Endothelial cell of umbilical vein (primary cell): ENCODE measurements at regions of chr7 and their contacts with region 1.

Region 1: DNA sequence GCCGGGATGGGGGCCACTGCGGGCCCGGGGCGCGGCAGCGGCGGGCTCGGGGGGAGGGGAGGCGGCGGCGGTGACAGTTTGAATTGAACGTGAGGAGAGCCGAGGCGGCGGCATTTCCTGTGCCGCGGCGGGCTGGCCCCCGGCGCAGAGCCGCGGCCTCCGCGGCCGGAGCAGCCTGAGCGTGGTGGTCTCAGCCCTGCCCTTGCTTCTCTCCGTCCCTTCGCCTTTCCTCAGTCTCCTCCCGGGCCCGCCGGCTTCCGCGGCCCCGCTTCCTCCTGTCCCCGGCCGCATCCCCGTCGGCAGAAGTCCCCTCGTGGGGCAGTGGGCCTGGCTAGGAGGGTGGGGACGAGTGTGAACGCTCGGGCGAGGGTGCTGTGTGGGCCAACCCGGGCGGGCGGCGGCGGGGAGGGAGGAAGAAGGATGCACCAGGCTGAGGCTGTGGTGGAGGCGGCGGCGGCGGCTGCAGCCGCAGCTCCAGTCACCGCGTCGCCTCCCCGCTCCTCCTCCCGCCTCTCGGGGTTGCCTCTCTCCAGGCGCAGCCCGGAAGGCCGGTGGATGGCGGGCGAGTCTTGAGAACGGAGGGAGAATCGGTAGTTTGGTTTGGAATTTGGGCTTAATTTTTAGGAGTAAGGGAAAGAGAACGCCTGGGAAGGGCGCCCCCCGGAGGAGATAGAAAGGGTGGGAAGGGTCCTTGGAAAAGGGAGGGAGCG is 690 bp downstream of the SEPTIN7 start:
- DNase-seq: peak; percentile 71
- H3K4me3 ChIP-seq: peak overlapping the region; percentile 61 to 97 (median 76)
- H3K27ac ChIP-seq: peak overlapping the region; percentile 53
- H3K4me1 ChIP-seq: peaks cover 20% of the 10 kb centered on the region
- H3K27me3 ChIP-seq: no peaks in the 10 kb centered on the region
- CTCF ChIP-seq: peak; percentile 50 to 60
- POLR2A ChIP-seq: peak; percentile 58

Region 2: GRCh38 chr7:35571611-35572240 is 229.8 kb before region 1 on chr7:
- CTCF ChIA-PET with region 1: no interaction called
- POLR2A ChIA-PET with region 1: no interaction called
- dilution Hi-C with region 1: no loop called
- intact Hi-C with region 1: no loop called
- DNase-seq: no peak
- H3K4me3 ChIP-seq: no peak overlapping the region
- H3K27ac ChIP-seq: no peak overlapping the region
- H3K4me1 ChIP-seq: no peaks in the 10 kb centered on the region
- H3K27me3 ChIP-seq: no peaks in the 10 kb centered on the region
- CTCF ChIP-seq: no peak
- POLR2A ChIP-seq: no peak

Region 3: DNA sequence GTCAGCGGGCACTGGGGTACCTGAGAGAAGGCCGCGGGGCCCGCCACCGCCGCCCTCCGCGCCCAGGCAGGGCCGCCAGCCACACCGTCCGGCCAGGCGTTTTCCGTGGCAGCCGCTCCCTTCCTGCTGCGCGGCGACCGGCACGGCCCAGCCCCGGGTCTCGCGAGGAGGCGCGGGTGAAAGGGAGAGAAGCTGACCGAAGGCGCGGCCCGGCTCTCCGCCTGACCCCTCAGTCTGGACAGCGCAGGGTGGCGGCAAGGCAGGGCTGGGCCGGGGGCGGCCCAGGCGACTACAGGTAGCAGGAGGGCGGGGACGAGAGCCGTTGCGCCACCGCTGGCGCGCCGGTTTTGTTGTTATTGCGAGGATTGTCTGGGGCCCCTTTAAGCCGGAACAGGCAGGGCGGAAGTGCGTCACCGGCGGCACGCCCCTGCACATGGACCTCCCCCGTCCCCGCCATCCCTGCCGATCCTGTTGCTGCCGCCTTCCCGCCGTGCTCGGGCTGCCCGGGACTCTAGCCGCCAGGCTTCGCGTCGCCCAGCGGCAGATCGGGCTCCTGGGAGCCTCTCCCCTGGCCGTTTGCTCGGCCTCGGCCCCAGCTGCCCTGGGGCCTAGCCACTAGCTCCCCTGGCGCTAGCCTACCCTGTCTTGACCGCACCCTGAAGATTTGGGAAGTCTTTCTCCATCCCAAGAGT is 106.6 kb before region 1 on chr7 and contains the start of gene HERPUD2:
- CTCF ChIA-PET with region 1: interaction called, 18 read pairs
- POLR2A ChIA-PET with region 1: interaction called, 14 read pairs
- dilution Hi-C with region 1: no loop called
- intact Hi-C with region 1: loop called (anchors 1 kb)
- DNase-seq: peak; percentile 91
- H3K4me3 ChIP-seq: peak within 1 kb of the TSS; percentile 53 to 81 (median 73)
- H3K27ac ChIP-seq: peak within 1 kb of the TSS; percentile 83
- H3K4me1 ChIP-seq: peaks cover 47% of the 10 kb centered on the region
- H3K27me3 ChIP-seq: no peaks in the 10 kb centered on the region
- CTCF ChIP-seq: no peak
- POLR2A ChIP-seq: peak; percentile 94
- total RNA-seq, gene HERPUD2: 27.7 and 33.9 TPM in 2 replicates

Region 4: DNA sequence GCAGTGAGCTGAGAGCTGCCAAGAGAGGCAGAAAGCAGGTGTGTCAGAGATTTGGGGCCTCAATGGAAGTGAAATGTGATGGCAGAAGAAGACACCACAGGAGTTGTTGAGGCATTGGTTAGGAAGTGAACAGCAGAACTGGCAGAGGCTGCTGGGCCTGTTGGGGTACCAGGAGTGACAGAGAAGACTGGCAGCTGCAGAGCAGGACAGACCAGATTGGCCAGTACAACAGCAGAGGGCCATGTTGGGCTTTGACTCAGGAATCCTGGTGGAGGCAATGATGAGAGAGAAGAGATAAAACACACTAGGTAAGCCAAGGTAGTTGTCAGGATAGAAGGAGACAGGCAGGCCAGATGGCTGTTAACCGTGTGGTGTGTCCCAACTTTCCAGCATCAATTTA is 86.7 kb before region 1 on chr7:
- CTCF ChIA-PET with region 1: interaction called, 38 read pairs
- POLR2A ChIA-PET with region 1: interaction called, 3 read pairs
- dilution Hi-C with region 1: no loop called
- intact Hi-C with region 1: no loop called
- DNase-seq: no peak
- H3K4me3 ChIP-seq: no peak overlapping the region
- H3K27ac ChIP-seq: no peak overlapping the region
- H3K4me1 ChIP-seq: no peaks in the 10 kb centered on the region
- H3K27me3 ChIP-seq: peaks cover 10 to 20% of the 10 kb centered on the region in 2 experiments
- CTCF ChIP-seq: no peak
- POLR2A ChIP-seq: no peak

Region 5: GRCh38 chr7:35871856-35872255 is 70.3 kb after region 1 on chr7:
- CTCF ChIA-PET with region 1: no interaction called
- POLR2A ChIA-PET with region 1: no interaction called
- dilution Hi-C with region 1: no loop called
- intact Hi-C with region 1: no loop called
- DNase-seq: no peak
- H3K4me3 ChIP-seq: no peak overlapping the region
- H3K27ac ChIP-seq: no peak overlapping the region
- H3K4me1 ChIP-seq: peaks cover 4% of the 10 kb centered on the region
- H3K27me3 ChIP-seq: no peaks in the 10 kb centered on the region
- CTCF ChIP-seq: no peak
- POLR2A ChIP-seq: no peak

Region 6: DNA sequence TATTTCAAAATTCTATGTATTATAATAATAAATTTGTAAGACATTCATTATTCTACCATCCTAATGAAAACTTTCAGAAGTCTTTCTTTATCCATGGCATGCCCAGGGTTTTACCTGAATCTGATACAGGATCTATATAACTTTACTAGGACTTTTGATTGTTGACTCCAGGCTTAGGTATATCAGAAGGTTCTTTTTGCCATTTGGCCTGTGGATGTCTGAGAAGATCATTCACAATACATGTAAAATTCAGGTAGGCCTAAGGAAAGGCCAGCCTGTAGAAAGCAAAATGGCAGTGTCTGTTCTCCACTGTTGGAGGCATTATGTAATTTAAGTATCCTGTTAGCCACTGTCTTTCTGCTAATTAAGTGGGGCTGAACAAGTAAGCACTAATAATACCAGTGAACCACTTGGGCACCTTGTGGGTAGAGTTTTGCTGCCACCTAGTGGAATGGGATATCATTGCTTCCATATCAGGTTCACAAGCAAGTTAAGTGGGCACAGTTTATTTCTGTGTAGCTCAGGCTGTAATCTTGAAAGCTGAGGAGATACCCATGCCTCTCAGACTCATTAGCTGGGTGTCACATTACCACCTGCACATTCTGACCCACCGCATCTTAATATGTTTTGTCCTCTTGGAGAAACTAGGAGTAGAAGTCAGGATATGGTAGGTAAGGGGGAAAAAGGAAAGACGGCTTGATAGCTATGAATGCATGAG is 104.8 kb after region 1 on chr7:
- CTCF ChIA-PET with region 1: interaction called, 21 read pairs
- POLR2A ChIA-PET with region 1: no interaction called
- dilution Hi-C with region 1: no loop called
- intact Hi-C with region 1: loop called (anchors 2 kb)
- DNase-seq: peak; percentile 84
- H3K4me3 ChIP-seq: no peak overlapping the region
- H3K27ac ChIP-seq: no peak overlapping the region
- H3K4me1 ChIP-seq: no peaks in the 10 kb centered on the region
- H3K27me3 ChIP-seq: no peaks in the 10 kb centered on the region
- CTCF ChIP-seq: peak; percentile 70 to 77
- POLR2A ChIP-seq: no peak

Region 7: GRCh38 chr7:36037121-36037662 is 235.6 kb after region 1 on chr7:
- CTCF ChIA-PET with region 1: no interaction called
- POLR2A ChIA-PET with region 1: no interaction called
- dilution Hi-C with region 1: no loop called
- intact Hi-C with region 1: loop called (anchors 5 kb)
- DNase-seq: peak; percentile 98
- H3K4me3 ChIP-seq: peak overlapping the region in 1 of 3 experiments; percentile 9
- H3K27ac ChIP-seq: peak overlapping the region; percentile 78
- H3K4me1 ChIP-seq: peaks cover 41% of the 10 kb centered on the region
- H3K27me3 ChIP-seq: peaks cover 7 to 10% of the 10 kb centered on the region in 2 experiments
- CTCF ChIP-seq: no peak
- POLR2A ChIP-seq: no peak